Right cardiac atrium (tissue), 5 donors: ENCODE measurements at regions of chr4 and their contacts with region 1.

Region 1: DNA sequence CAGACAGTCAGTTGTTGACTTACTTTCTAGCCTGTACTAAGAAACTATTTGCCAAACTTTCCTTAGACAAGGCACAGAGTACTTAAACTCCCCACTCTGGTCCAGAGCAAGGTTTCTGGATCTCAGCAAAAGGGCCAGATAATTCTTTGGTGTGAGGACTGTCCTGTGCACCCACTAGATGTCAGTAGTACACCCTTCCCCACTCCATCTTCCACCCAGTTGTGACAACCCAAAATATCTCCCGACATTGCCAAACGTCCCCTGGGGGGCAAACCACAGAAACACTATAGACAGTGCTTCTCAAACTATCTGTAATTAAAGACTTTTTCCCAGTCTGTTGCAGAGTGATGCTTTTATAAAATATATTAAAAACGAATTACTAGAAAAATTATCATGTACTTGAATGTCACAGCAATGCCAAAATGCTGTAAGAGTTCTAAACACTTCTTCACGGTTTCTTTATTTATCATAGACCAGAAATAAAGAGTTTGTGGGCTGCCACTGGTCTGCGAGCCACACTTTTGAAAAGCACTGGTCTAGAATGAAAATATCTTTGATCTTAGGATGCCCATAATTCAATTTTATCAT is 203.5 kb downstream of the PRDM5 start:
- DNase-seq: peak in 2 of 3 donors; percentile 30 to 39
- ATAC-seq: peak; percentile 86 to 88
- H3K4me3 ChIP-seq: no peak overlapping the region
- H3K27ac ChIP-seq: no peak overlapping the region
- H3K4me1 ChIP-seq: no peaks in the 10 kb centered on the region
- H3K27me3 ChIP-seq: no peaks in the 10 kb centered on the region

Region 2: DNA sequence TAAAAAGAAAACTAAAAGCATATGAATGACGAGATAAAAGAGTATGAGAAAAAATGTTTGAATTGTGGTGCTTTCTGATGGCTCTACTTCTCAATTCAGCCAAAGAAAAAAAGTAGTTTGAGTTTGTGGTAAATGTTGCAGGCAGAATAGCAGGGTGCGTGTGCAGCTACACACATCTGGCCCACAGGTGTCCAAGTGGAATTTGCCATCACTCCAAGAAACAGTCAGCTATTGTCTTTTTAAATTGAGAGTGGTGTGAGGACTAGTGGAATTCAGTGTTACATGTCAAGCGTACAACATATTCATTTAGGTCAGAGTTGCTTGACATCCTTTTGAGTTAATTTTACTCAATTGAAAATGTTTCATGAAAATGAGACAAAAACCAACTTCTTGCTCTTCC is 227.6 kb before region 1 on chr4:
- intact Hi-C with region 1: no loop called
- DNase-seq: no peak
- ATAC-seq: no peak
- H3K4me3 ChIP-seq: no peak overlapping the region
- H3K27ac ChIP-seq: no peak overlapping the region
- H3K4me1 ChIP-seq: no peaks in the 10 kb centered on the region
- H3K27me3 ChIP-seq: no peaks in the 10 kb centered on the region

Region 3: GRCh38 chr4:120918788-120919187 is 199.7 kb after region 1 on chr4:
- intact Hi-C with region 1: loop called in 1 of 4 experiments (anchors 10 kb)
- DNase-seq: peak; percentile 55 to 81 (median 75)
- ATAC-seq: peak in 1 of 2 donors; percentile 49
- H3K4me3 ChIP-seq: no peak overlapping the region
- H3K27ac ChIP-seq: no peak overlapping the region
- H3K4me1 ChIP-seq: no peaks in the 10 kb centered on the region
- H3K27me3 ChIP-seq: no peaks in the 10 kb centered on the region